ENCODE measurements at regions of chr12 and their contacts with region 1.

Region 1: DNA sequence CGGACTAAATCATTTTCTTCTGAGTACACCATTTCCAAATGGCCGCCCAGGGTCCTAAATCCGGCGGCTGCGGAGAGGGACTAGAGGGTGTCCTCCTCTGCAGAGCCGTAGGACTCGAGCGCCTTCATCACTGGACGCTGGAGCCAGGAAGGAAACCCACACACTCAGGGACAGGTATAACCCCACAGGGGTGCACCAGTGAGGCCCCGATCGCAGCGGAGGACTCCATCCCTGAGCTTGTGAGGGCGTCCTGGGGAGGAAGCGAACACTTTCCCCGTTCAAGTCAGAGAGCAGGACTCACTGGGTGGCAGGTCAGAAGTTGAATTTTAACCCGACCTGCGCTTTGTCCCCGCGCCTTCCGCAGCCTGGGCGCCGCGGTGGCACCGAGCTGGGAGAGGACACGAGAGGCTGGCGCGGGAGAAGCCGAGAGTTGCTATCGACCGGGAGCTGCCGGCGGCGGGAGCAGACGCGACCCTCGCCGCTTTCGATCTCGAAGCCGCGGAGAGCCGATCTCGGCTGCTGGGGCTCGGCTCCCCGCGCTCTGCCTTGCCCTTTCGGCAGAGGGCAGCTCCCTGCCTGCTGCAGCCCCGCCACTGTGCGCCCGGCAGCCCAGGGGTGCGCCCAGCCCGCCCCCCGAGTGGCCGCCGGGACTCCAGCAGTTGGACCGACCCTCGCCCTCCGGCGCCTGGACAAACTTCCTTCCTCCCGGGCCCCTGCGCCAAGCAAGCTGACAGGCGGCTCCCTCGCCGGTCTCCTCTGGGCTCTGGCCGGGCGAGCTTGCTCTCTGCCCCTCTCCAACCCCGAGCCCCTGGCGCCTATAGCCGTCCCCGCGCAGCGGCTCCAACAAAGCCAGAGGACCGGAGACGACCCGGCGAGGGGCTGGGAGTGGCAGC is 990 bp downstream of the LIN7A start:
- DNase-seq: peak; percentile 73
- ATAC-seq: peak; percentile 85

Region 2: DNA sequence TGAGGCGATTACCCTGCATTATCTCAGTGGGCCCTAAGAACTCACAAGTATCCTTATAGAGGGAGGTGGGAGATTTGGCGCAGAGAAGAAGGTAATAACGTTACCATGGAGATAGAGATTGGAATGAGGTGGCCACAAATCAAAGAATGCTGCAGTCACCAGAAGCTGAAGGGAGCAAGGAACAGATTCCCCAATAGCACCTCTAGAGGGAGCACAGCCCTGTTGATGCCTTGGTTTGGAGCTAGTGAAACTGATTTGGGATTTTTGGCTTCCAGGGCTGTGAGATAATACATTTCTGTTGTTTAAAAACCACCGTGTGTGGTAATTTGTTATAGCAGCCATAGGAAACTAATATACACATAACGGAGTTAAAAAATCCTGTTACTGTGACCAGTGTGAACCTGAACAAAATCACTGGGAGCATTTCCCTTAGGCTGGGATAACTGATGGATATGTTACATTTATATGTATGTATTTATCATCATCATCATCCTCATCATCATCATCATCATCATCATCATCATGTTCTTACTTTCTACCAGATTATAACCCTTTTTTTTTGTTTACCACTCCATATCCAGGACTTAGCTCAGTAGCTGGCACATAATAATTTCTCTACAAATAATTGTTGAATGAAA is 99.3 kb before region 1 on chr12:
- intact Hi-C with region 1: loop called (anchors 2 kb)
- DNase-seq: no peak
- ATAC-seq: peak; percentile 88

Region 3: GRCh38 chr12:81077686-81078441 is 141.1 kb after region 1 on chr12 and contains the start of gene ACSS3:
- intact Hi-C with region 1: loop called (anchors 2 kb)
- DNase-seq: peak; percentile 80
- ATAC-seq: peak; percentile 91
- total RNA-seq, gene ACSS3: 20.4 TPM

Measured in Right ventricle myocardium inferior (tissue), 1 donor.